ENCODE measurements at regions of chr19 and their contacts with region 1.

Region 1: GRCh38 chr19:11558881-11559828 is at the start of gene ELOF1:
- DNase-seq: peak; percentile 94 to 97
- ATAC-seq: peak; percentile 99 to 100
- H3K4me3 ChIP-seq: peak within 1 kb of the TSS; percentile 74
- H3K27ac ChIP-seq: peak within 1 kb of the TSS; percentile 79 to 88
- H3K4me1 ChIP-seq: peaks cover 7% of the 10 kb centered on the region; the same call in 2 of the 3 replicates
- CTCF ChIP-seq: no peak
- EP300 ChIP-seq: no peak
- POLR2A ChIP-seq: peak; percentile 68
- RAD21 ChIP-seq: no peak
- polyA plus RNA-seq, gene ELOF1: 34.4 and 47.9 TPM in 2 replicates

Region 2: GRCh38 chr19:11535792-11536595 is 23.2 kb before region 1 on chr19:
- CTCF ChIA-PET with region 1: interaction called, 11 read pairs
- POLR2A ChIA-PET with region 1: interaction called, 4 read pairs
- DNase-seq: peak; percentile 67 to 88
- ATAC-seq: peak; percentile 76 to 79
- H3K4me3 ChIP-seq: peak overlapping the region; percentile 40
- H3K27ac ChIP-seq: peak overlapping the region; percentile 78 to 90
- H3K4me1 ChIP-seq: peaks cover 30% of the 10 kb centered on the region
- CTCF ChIP-seq: peak; percentile 80
- EP300 ChIP-seq: no peak
- POLR2A ChIP-seq: no peak
- RAD21 ChIP-seq: 0 out of 5 replicates have a peak, but pooled peaks of 1 of the 2 experiments have one; percentile 27

Measured in A549 (cell line).